B cell (primary cell): ENCODE measurements at regions of chr2 and their contacts with region 1.

Region 1: DNA sequence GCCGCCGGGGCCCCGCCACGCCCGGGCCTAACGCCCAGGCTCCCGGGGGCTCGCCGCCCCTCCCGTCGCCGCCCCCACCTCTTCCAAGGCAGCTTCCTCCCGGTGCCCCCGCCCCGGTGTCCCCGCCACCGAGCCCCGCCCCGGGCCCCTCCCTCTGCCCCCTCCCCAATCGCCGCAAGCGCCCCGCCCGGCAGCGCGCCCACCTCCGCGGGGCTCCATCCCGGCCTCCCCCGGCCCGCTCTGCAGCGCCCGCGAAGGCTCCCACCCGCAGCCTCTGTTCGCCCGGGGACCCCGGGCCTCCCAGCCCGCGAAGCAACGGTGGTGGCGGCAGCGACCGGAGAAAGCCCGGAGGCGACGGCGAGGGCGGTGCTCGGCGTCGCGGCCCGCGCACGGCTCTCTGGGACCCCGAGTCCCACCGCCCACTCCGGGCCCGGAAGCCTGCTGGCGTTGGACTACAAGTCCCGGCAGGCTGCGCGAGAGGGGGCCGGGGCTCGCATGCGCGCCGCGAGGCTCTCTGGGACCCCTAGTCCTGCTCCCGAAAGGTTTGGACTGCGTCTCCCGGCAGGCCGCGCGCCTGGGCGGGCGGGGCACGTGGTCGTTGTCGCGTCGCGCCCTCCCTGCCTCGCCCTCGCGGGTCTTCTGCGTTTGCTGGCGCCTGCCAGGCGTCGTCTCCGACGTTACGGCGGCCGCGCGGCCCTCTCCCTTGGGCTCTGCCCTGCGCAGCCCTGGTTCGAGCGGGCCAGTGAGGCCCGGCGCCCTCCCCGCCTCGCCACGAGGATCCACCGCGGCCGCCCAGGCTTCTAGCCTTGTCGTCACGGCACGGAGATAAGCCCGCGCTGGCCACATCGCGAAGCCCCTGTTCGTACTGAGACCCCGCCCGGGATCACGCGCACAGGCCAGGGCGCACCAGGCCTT is at the start of gene STK25:
- DNase-seq: peak; percentile 97
- ATAC-seq: peak; percentile 93
- H3K4me3 ChIP-seq: peak within 1 kb of the TSS; percentile 34 to 78 (median 70)
- H3K4me3 Mint-ChIP-seq: peak within 1 kb of the TSS; percentile 85
- H3K27ac ChIP-seq: peak within 1 kb of the TSS; percentile 56 to 85
- H3K27ac Mint-ChIP-seq: peak within 1 kb of the TSS; percentile 89
- H3K4me1 ChIP-seq: peaks cover 15 to 20% of the 10 kb centered on the region in 2 donors
- H3K4me1 Mint-ChIP-seq: peaks cover 24% of the 10 kb centered on the region
- H3K27me3 ChIP-seq: no peaks in the 10 kb centered on the region
- H3K27me3 Mint-ChIP-seq: no peaks in the 10 kb centered on the region
- CTCF ChIP-seq: no peak
- total RNA-seq, gene STK25: 183 TPM in 2 replicates

Region 2: GRCh38 chr2:240586198-240586918 is 922.1 kb before region 1 on chr2 and contains the start of gene CAPN10:
- CTCF ChIA-PET with region 1: no interaction called
- POLR2A ChIA-PET with region 1: no interaction called
- intact Hi-C with region 1: loop called (anchors 2 kb)
- DNase-seq: peak; percentile 97
- ATAC-seq: peak; percentile 77
- H3K4me3 ChIP-seq: peak within 1 kb of the TSS; percentile 62 to 93 (median 89)
- H3K4me3 Mint-ChIP-seq: peak within 1 kb of the TSS; percentile 93
- H3K27ac ChIP-seq: peak within 1 kb of the TSS; percentile 95 to 97
- H3K27ac Mint-ChIP-seq: peak within 1 kb of the TSS; percentile 94
- H3K4me1 ChIP-seq: peaks cover 32 to 40% of the 10 kb centered on the region in 2 donors
- H3K4me1 Mint-ChIP-seq: peaks cover 54% of the 10 kb centered on the region
- H3K27me3 ChIP-seq: no peaks in the 10 kb centered on the region
- H3K27me3 Mint-ChIP-seq: no peaks in the 10 kb centered on the region
- CTCF ChIP-seq: no peak
- total RNA-seq, gene CAPN10: 73.4 and 88.9 TPM in 2 replicates

Region 3: DNA sequence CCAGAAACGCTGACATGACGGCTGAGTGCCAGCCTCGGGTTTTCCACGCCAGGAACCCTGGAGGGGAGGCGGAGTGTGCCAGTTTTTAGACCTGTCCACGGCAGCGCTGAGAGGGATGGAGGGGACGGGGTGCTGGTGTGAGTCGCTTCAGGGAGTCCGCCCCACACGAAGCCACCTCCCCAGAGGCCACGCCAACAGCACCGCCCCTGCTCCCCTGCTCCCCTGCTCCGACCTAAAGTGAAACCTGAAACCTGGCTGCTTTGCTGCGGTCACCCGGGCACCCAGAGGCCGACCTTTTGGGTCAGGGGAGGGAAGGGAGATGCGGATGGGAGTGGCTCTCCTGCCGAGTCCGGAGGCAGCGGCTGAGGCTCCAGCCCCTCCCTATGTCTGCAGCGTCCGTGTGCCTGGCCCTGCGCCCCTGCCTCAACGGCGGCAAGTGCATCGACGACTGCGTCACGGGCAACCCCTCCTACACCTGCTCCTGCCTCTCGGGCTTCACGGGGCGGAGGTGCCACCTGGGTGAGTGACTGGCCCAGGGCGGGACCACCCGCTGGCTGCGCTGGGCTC is 472.0 kb before region 1 on chr2:
- CTCF ChIA-PET with region 1: no interaction called
- POLR2A ChIA-PET with region 1: no interaction called
- intact Hi-C with region 1: loop called (anchors 2 kb)
- DNase-seq: peak; percentile 87
- ATAC-seq: peak; percentile 69
- H3K4me3 ChIP-seq: peak overlapping the region in 4 of 5 experiments; percentile 39 to 79 (median 65)
- H3K4me3 Mint-ChIP-seq: peak overlapping the region; percentile 92
- H3K27ac ChIP-seq: peak overlapping the region; percentile 68 to 79
- H3K27ac Mint-ChIP-seq: peak overlapping the region; percentile 94
- H3K4me1 ChIP-seq: peaks cover 38 to 59% of the 10 kb centered on the region in 2 donors
- H3K4me1 Mint-ChIP-seq: peaks cover 57% of the 10 kb centered on the region
- H3K27me3 ChIP-seq: no peaks in the 10 kb centered on the region
- H3K27me3 Mint-ChIP-seq: no peaks in the 10 kb centered on the region
- CTCF ChIP-seq: no peak

Region 4: GRCh38 chr2:241540771-241541561 is 32.5 kb after region 1 on chr2:
- CTCF ChIA-PET with region 1: no interaction called
- POLR2A ChIA-PET with region 1: no interaction called
- intact Hi-C with region 1: loop called (anchors 1 kb)
- DNase-seq: peak; percentile 75
- ATAC-seq: peak; percentile 92
- H3K4me3 ChIP-seq: peak overlapping the region in 3 of 5 experiments; percentile 33 to 50 (median 49)
- H3K4me3 Mint-ChIP-seq: peak overlapping the region; percentile 82
- H3K27ac ChIP-seq: no peak overlapping the region
- H3K27ac Mint-ChIP-seq: peak overlapping the region; percentile 38
- H3K4me1 ChIP-seq: peaks cover 12 to 13% of the 10 kb centered on the region in 2 donors
- H3K4me1 Mint-ChIP-seq: peaks cover 3% of the 10 kb centered on the region
- H3K27me3 ChIP-seq: peaks cover 0 to 49% (median 18%) of the 10 kb centered on the region in 4 experiments
- H3K27me3 Mint-ChIP-seq: peaks cover 19% of the 10 kb centered on the region
- CTCF ChIP-seq: no peak

Region 5: DNA sequence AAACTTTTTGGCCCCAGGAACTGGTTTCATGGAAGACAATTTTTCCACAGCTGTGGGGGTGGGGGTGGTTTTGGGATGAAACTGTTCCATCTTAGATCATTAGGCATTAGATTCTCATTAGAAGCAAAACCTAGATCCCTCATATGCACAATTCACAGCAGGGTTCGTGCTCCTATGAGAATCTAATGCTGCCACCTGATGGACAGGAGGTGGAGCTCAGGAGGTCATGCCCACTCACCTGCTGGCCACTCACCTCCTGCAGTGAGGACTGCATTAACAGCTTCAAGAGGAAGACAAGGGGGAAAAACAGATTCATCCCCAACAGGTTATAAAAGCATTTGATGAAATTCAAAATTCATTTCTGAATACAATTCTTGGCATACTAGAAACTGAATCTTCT is 90.0 kb after region 1 on chr2:
- CTCF ChIA-PET with region 1: no interaction called
- POLR2A ChIA-PET with region 1: no interaction called
- intact Hi-C with region 1: no loop called
- DNase-seq: no peak
- ATAC-seq: no peak
- H3K4me3 ChIP-seq: no peak overlapping the region
- H3K4me3 Mint-ChIP-seq: no peak overlapping the region
- H3K27ac ChIP-seq: no peak overlapping the region
- H3K27ac Mint-ChIP-seq: no peak overlapping the region
- H3K4me1 ChIP-seq: no peaks in the 10 kb centered on the region
- H3K4me1 Mint-ChIP-seq: no peaks in the 10 kb centered on the region
- H3K27me3 ChIP-seq: no peaks in the 10 kb centered on the region
- H3K27me3 Mint-ChIP-seq: no peaks in the 10 kb centered on the region
- CTCF ChIP-seq: no peak

Region 6: DNA sequence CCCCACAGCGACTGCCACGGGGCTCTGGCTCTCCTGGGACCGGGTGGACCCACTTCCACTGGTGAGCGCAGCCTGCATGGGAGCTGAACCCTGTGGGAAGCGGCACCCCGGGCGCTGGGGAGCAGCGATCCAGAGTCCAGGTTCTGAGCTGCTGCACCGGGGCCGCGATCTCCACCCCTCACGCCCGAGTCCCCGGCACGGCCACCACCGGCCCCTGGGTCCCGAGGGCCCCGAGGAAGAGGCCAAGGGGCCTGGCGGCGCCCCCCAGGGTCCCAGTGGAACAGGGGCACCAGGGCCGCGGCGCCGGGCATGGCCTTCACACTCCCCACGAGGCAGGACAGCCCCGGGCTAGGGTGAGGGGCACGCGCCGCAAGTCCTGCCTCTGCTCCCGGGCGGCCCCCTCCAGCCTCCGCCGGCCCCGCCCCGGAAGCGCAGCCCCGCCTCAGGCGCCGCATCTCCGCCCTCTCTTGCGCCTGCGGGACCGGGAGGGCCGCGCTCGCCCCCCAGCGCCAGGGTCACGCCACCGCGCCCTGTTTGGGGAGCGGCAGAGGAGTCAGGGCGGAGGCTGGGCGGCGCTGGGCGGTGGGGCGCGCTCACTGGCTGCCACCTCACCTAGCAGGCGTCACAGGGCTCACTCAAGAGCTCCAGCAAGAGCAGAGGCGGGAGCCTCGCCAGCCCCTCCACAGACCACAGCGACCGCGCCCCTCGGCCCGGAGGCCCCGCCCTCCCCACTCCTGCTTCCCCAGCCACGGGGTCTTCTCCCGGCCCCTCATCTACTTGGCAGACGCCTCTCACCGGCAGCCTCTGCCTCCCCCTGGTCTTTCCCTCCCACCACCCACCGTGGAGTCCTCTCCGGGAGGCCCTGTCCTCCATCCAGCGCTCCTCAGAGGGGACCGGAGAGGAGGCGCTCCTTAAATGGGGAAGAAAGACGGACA is 101.6 kb after region 1 on chr2:
- CTCF ChIA-PET with region 1: no interaction called
- POLR2A ChIA-PET with region 1: no interaction called
- intact Hi-C with region 1: loop called (anchors 1 kb)
- DNase-seq: peak; percentile 93
- ATAC-seq: peak; percentile 99
- H3K4me3 ChIP-seq: peak overlapping the region in 4 of 5 experiments; percentile 50 to 71 (median 62)
- H3K4me3 Mint-ChIP-seq: peak overlapping the region; percentile 66
- H3K27ac ChIP-seq: peak overlapping the region; percentile 50 to 74
- H3K27ac Mint-ChIP-seq: peak overlapping the region; percentile 63
- H3K4me1 ChIP-seq: peaks cover 8 to 16% of the 10 kb centered on the region in 2 donors
- H3K4me1 Mint-ChIP-seq: peaks cover 20% of the 10 kb centered on the region
- H3K27me3 ChIP-seq: no peaks in the 10 kb centered on the region
- H3K27me3 Mint-ChIP-seq: no peaks in the 10 kb centered on the region
- CTCF ChIP-seq: peak; percentile 76

Region 7: GRCh38 chr2:241617431-241618154 is 109.1 kb after region 1 on chr2:
- CTCF ChIA-PET with region 1: interaction called, 3 read pairs
- POLR2A ChIA-PET with region 1: no interaction called
- intact Hi-C with region 1: loop called (anchors 1 kb)
- DNase-seq: peak; percentile 76
- ATAC-seq: peak; percentile 77
- H3K4me3 ChIP-seq: peak overlapping the region; percentile 43 to 74 (median 55)
- H3K4me3 Mint-ChIP-seq: peak overlapping the region; percentile 84
- H3K27ac ChIP-seq: peak overlapping the region; percentile 30 to 64
- H3K27ac Mint-ChIP-seq: peak overlapping the region; percentile 76
- H3K4me1 ChIP-seq: peaks cover 15 to 18% of the 10 kb centered on the region in 2 donors
- H3K4me1 Mint-ChIP-seq: peaks cover 22% of the 10 kb centered on the region
- H3K27me3 ChIP-seq: no peaks in the 10 kb centered on the region
- H3K27me3 Mint-ChIP-seq: no peaks in the 10 kb centered on the region
- CTCF ChIP-seq: no peak